WTC11 (cell line): ENCODE measurements at regions of chr17 and their contacts with region 1.

Region 1: DNA sequence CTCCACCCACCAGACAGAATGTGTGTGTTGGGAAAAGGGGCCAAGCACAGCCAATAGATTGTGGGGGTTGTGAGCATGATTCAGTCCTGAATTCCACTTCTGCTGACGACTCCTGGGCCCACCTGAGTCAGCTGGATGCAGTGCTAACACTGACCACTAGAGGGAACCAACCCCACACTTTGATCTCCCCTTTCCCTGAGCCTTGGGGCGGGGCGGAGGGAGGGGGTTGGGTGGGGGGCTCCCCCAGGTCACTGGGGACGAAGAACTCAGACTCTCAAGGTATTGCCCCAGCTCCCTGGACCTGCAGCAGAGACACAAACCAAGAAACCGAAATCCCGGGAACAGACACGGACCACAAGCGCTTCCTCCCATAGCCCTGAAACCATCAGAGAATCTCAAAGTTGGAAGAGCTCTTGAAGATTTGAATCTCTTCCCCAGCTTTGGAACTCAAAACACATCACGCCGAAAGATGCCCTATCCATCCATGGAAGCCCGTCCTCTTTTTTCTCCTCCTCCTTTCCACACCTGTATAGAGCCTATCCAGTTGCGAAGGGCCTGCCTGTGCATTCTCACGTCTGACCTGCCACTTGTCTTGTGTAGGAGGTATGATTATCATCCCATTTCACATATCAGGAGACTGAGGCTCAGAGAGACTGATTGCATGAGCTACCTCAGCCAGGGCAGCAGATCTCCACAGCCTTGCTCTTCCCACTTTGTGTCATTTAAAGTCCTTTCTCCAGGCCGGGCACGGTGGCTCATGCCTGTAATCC is 784 bp upstream of the CSHL1 start:
- DNase-seq: peak; percentile 77
- ATAC-seq: peak; percentile 71
- H3K4me3 Mint-ChIP-seq: no peak overlapping the region
- H3K27ac Mint-ChIP-seq: no peak overlapping the region
- H3K4me1 Mint-ChIP-seq: peaks cover 17% of the 10 kb centered on the region
- H3K27me3 Mint-ChIP-seq: peaks cover 4% of the 10 kb centered on the region; the same call in 1 of the 2 replicates
- CTCF ChIP-seq: peak; percentile 96

Region 2: DNA sequence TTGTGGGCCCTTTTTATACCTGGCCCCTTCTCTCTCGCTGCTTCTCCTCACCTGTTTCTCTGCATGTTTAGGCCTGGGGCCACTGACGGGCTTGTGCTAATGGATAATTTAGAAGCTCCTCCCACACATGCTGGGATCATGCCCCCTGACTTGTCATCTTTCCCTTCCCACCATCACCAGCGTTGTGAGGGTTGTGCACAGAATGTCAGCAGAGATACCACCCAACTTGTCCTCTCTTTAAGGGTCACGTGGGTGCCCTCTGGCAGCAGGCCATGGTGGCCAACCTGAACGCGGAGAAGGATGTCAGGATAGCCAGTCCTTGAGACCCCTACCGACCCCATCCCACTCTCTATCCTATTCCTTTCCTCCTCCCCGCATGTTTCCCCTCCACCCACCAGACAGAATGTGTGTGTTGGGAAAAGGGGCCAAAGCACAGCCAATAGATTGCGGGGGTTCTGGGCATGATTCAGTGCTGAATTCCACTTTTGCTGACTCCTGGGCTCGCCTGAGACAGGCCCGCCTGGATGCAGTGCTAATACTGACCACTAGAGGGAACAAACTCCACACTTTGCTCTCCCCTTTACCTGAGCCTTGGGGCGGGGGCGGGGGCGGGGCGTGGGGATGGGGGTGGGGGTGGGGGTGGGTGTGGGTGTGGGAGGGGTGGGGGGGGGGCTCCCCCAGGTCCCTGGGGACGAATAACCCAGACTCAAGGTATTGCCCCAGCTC is 29.8 kb before region 1 on chr17 and contains the start of gene GH2:
- CTCF ChIA-PET with region 1: interaction called, 16 read pairs
- POLR2A ChIA-PET with region 1: no interaction called
- DNase-seq: peak; percentile 86
- ATAC-seq: peak; percentile 83
- H3K4me3 Mint-ChIP-seq: peak within 1 kb of the TSS; percentile 23; the same call in 1 of the 2 replicates
- H3K27ac Mint-ChIP-seq: peak within 1 kb of the TSS; percentile 79
- H3K4me1 Mint-ChIP-seq: peaks cover 20% of the 10 kb centered on the region
- H3K27me3 Mint-ChIP-seq: peaks cover 4% of the 10 kb centered on the region; the same call in 1 of the 2 replicates
- CTCF ChIP-seq: peak; percentile 81
- total RNA-seq, gene GH2: 0.35 to 1.3 TPM (median 0.60 TPM) in 3 replicates

Region 3: DNA sequence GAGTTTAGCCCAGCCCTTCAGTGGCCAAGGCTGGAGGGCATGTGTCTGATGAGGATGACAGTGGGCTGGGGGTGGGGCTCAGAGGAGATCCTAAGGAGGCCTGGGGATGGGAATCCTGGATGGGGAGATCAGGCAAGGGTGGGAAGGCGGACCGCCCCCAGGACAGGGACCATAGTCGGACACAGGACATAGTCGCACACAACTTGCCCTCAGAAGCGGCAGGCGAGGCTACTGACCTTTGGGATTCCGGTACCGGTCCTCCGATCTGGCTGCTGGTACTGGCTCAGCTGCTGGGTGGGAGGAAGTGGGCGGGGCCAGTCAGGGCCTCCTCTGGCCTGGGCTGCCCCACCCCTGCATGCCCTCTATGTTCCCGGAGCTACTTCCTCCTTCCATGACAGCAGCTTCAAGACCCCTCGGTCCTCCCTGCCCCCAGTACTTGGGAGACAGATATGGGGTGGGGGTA is 19.3 kb after region 1 on chr17:
- CTCF ChIA-PET with region 1: interaction called, 25 read pairs
- POLR2A ChIA-PET with region 1: no interaction called
- DNase-seq: peak; percentile 58
- ATAC-seq: peak; percentile 86
- H3K4me3 Mint-ChIP-seq: no peak overlapping the region
- H3K27ac Mint-ChIP-seq: no peak overlapping the region
- H3K4me1 Mint-ChIP-seq: peaks cover 18% of the 10 kb centered on the region
- H3K27me3 Mint-ChIP-seq: no peaks in the 10 kb centered on the region; the same call in 1 of the 2 replicates
- CTCF ChIP-seq: no peak

Region 4: DNA sequence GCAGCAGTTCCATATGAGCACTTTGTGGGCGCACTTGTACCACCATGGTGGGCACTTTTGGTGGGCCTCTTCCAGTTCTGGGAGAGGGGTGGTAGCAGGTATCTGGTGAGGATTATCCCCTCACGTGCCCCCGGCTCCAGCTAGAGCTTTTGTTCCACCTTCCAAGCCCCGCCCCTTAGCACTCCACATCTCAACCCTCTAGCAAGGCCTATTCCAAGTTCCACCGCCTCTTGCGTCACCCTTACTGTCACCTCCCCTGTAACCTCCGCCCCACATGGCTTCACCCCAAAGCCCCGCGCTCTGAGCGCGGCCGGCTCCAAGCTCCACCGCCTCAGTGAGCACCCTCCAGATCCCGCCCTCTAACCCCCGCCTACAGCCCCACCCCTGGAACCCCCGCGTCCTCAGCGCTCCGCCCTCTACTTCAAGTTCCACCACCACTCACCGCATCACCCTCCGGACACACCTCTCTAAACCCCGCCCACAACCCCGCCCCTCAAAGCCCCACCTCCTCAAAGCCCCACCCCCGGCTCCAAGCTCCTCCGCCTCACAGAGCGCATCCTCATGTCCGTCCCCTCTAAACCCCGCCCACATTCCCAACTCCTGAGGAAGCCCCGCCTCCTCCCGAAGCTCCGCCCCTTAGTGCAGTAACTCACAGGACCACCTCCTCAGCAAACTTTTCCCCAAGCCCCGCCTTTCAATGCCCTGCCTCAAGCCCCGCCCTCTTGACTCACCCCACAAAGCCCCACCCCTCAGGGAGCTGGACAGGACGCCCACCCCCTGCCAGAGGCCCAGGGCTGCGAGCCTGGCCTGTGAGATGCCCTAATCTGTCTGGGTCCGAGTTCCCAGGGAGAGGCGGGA is 49.7 kb after region 1 on chr17:
- CTCF ChIA-PET with region 1: interaction called, 19 read pairs
- POLR2A ChIA-PET with region 1: no interaction called
- DNase-seq: peak; percentile 100
- ATAC-seq: peak; percentile 90
- H3K4me3 Mint-ChIP-seq: peak overlapping the region; percentile 76
- H3K27ac Mint-ChIP-seq: 0 out of 2 replicates have a peak overlapping the region, but pooled peaks have one; percentile 70
- H3K4me1 Mint-ChIP-seq: peaks cover 20% of the 10 kb centered on the region
- H3K27me3 Mint-ChIP-seq: no peaks in the 10 kb centered on the region; the same call in 1 of the 2 replicates
- CTCF ChIP-seq: no peak

Region 5: DNA sequence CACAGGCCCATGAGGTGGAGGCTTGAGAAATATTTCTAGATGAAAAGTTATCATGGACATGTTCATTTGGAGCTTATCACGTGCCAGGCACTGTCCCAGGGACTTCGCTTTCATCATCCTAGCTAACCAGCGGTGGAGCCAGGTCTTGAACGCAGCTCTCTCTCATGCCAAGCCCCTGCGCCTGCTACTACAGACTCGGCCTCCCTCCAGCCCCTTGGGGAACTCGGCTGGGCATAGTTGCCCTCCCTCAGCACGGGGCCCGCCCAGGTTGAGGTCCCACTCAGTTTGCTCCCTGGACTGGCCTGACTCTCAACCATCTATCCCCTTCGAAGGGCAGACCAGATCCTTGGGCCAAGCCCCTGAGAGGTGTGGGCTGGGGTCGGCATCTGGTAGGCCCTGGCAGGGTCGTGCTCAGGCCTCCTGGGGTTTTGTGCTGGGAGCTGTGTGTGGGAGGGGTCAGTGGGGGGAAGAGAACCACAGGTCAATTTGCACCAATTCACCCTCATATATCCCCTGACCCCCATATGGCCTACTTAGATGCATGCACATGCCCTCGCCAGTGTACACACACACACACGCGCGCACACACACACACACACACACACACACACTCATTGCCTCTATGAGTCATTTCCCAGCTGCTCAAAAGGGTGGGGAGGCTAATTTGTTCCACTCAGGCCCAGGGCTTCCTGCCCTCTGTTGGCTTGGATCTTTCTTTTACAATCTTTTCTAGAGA is 73.0 kb after region 1 on chr17:
- CTCF ChIA-PET with region 1: interaction called, 18 read pairs
- POLR2A ChIA-PET with region 1: no interaction called
- DNase-seq: no peak
- ATAC-seq: no peak
- H3K4me3 Mint-ChIP-seq: no peak overlapping the region
- H3K27ac Mint-ChIP-seq: no peak overlapping the region
- H3K4me1 Mint-ChIP-seq: peaks cover 15% of the 10 kb centered on the region
- H3K27me3 Mint-ChIP-seq: peaks cover 4% of the 10 kb centered on the region; the same call in 1 of the 2 replicates
- CTCF ChIP-seq: no peak

Region 6: GRCh38 chr17:64020056-64020766 is 108.4 kb after region 1 on chr17 and contains the start of gene ICAM2:
- CTCF ChIA-PET with region 1: interaction called, 34 read pairs
- POLR2A ChIA-PET with region 1: no interaction called
- DNase-seq: no peak
- ATAC-seq: peak; percentile 63
- H3K4me3 Mint-ChIP-seq: peak within 1 kb of the TSS; percentile 41
- H3K27ac Mint-ChIP-seq: no peak within 1 kb of the TSS; the same call in 1 of the 2 replicates
- H3K4me1 Mint-ChIP-seq: peaks cover 10% of the 10 kb centered on the region
- H3K27me3 Mint-ChIP-seq: peaks cover 2% of the 10 kb centered on the region; the same call in 1 of the 2 replicates
- CTCF ChIP-seq: no peak
- total RNA-seq, gene ICAM2: 0.33 to 0.57 TPM (median 0.44 TPM) in 3 replicates

Region 7: GRCh38 chr17:64117981-64118979 is 206.4 kb after region 1 on chr17:
- CTCF ChIA-PET with region 1: no interaction called
- POLR2A ChIA-PET with region 1: no interaction called
- DNase-seq: no peak
- ATAC-seq: no peak
- H3K4me3 Mint-ChIP-seq: no peak overlapping the region
- H3K27ac Mint-ChIP-seq: no peak overlapping the region
- H3K4me1 Mint-ChIP-seq: no peaks in the 10 kb centered on the region
- H3K27me3 Mint-ChIP-seq: no peaks in the 10 kb centered on the region
- CTCF ChIP-seq: no peak